IMR-90 (cell line): ENCODE measurements at regions of chr11 and their contacts with region 1.

Region 1: GRCh38 chr11:45771566-45772448 is 33.1 kb upstream of the SLC35C1 start:
- DNase-seq: peak; percentile 58
- ATAC-seq: peak; percentile 97
- H3K4me3 ChIP-seq: peak overlapping the region; percentile 47
- H3K27ac ChIP-seq: no peak overlapping the region
- H3K4me1 ChIP-seq: no peaks in the 10 kb centered on the region
- H3K27me3 ChIP-seq: peaks cover 20% of the 10 kb centered on the region
- CTCF ChIP-seq: peak; percentile 94
- POLR2A ChIP-seq: no peak
- RAD21 ChIP-seq: peak; percentile 86

Region 2: GRCh38 chr11:45339729-45340519 is 431.9 kb before region 1 on chr11:
- CTCF ChIA-PET with region 1: no interaction called
- POLR2A ChIA-PET with region 1: no interaction called
- dilution Hi-C with region 1: no loop called
- in situ Hi-C with region 1: no loop called
- intact Hi-C with region 1: loop called (anchors 1 kb)
- DNase-seq: peak; percentile 68
- ATAC-seq: peak; percentile 100
- H3K4me3 ChIP-seq: no peak overlapping the region
- H3K27ac ChIP-seq: no peak overlapping the region
- H3K4me1 ChIP-seq: no peaks in the 10 kb centered on the region
- H3K27me3 ChIP-seq: peaks cover 5% of the 10 kb centered on the region
- CTCF ChIP-seq: peak; percentile 74
- POLR2A ChIP-seq: no peak
- RAD21 ChIP-seq: peak; percentile 42

Region 3: DNA sequence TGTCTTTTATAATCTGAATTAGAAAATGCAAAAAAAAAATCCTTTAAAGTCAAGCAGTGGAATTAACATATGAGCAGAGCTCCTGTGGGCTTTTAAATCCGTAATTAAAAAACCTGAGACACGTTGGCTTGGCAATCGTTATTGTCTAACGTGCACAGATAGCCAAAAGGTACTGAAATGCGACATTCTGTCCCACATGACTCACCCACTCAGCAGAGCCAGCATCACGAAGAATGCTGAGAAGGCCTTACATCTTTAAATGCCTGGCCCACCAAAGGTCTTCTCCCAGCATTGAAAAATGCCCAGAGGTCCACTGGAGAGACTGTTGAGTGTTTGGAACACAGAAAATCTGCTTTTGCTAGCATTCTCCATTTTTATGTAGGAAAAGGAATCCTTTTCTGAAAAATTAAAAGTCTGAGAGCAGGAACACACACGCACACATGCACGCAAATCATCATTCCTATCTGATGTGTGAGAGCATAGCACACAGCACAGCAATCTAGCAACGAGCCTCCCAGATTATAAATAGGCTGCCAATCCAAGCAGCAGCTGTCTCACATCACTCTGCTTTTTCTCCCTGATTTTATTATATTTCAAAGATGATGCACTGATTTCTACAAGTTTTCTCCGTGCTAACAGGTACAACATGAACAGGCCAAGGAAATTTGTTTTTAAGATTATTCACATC is 254.9 kb after region 1 on chr11:
- CTCF ChIA-PET with region 1: no interaction called
- POLR2A ChIA-PET with region 1: no interaction called
- dilution Hi-C with region 1: no loop called
- in situ Hi-C with region 1: no loop called
- intact Hi-C with region 1: no loop called
- DNase-seq: peak; percentile 73
- ATAC-seq: peak; percentile 81
- H3K4me3 ChIP-seq: no peak overlapping the region
- H3K27ac ChIP-seq: peak overlapping the region; percentile 58
- H3K4me1 ChIP-seq: peaks cover 5% of the 10 kb centered on the region; the same call in 1 of the 2 replicates
- H3K27me3 ChIP-seq: no peaks in the 10 kb centered on the region
- CTCF ChIP-seq: no peak
- POLR2A ChIP-seq: no peak
- RAD21 ChIP-seq: no peak